MCF 10A (cell line): ENCODE measurements at regions of chr17 and their contacts with region 1.

Region 1: GRCh38 chr17:59155439-59156182 is at the start of gene PRR11:
- DNase-seq: peak; percentile 100
- H3K4me3 Mint-ChIP-seq: no peak within 1 kb of the TSS
- H3K27ac Mint-ChIP-seq: no peak within 1 kb of the TSS
- H3K4me1 Mint-ChIP-seq: peaks cover 49% of the 10 kb centered on the region
- H3K27me3 Mint-ChIP-seq: no peaks in the 10 kb centered on the region
- CTCF ChIP-seq: no peak
- total RNA-seq, gene PRR11: 35.7 and 48.5 TPM in 2 replicates

Region 2: GRCh38 chr17:59093702-59094231 is 61.8 kb before region 1 on chr17:
- CTCF ChIA-PET with region 1: no interaction called
- POLR2A ChIA-PET with region 1: interaction called, 10 read pairs
- intact Hi-C with region 1: no loop called
- DNase-seq: peak; percentile 87
- H3K4me3 Mint-ChIP-seq: peak overlapping the region; percentile 45
- H3K27ac Mint-ChIP-seq: peak overlapping the region; percentile 78
- H3K4me1 Mint-ChIP-seq: peaks cover 21% of the 10 kb centered on the region
- H3K27me3 Mint-ChIP-seq: no peaks in the 10 kb centered on the region
- CTCF ChIP-seq: no peak

Region 3: DNA sequence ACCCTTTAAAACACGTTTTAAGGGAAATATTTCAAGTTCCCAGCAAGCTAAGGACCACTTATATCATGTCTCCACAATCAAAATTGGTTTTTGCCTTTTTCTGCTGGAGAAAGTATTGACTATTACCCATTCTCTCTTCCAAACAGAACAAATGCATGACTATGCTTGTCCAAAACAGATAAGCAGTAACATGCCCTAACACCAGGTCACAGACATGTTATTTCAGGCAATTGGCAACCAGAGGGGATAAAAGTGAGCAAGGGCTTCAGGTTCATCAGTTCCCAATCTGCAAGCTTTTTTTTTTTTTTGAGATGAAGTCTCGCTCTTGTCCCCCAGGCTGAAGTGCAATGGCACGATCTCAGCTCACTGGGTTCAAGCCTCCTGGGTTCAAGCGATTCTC is 15.7 kb before region 1 on chr17:
- CTCF ChIA-PET with region 1: interaction called, 9 read pairs
- POLR2A ChIA-PET with region 1: interaction called, 14 read pairs
- intact Hi-C with region 1: no loop called
- DNase-seq: no peak
- H3K4me3 Mint-ChIP-seq: no peak overlapping the region
- H3K27ac Mint-ChIP-seq: peak overlapping the region; percentile 27
- H3K4me1 Mint-ChIP-seq: no peaks in the 10 kb centered on the region
- H3K27me3 Mint-ChIP-seq: no peaks in the 10 kb centered on the region
- CTCF ChIP-seq: no peak

Region 4: DNA sequence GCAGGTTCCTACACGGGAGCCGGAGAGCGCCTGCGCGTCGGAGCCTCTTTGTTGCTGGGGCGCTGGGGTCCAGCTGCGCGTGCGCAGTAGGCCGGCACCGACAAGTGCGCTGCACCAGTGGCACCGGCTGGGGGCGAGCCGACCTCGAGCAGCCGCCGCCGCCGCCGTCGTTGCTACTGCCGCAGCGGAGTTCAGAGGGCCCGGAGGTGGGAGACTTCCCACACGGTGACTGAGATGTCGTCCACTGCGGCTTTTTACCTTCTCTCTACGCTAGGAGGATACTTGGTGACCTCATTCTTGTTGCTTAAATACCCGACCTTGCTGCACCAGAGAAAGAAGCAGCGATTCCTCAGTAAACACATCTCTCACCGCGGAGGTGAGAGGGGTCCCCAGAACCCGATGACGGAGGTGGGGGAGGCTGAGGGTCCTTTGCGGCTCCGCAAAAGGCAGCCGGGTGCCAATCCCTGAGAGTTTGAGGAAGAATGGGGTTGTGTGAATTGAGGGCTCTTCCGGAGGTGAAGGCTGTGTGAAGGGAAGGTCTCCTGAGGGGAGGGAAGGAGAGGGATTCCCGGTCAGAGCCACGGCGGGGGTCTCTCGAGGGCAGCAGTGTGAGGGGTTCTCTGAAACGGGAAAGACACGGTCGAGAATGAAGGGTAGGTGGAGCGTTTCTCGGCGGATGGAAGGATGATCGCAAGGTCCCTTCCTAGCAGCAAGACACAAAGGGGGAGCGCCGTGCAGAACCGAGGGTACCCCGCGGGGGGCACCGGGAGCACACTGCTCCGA is 65.0 kb after region 1 on chr17 and contains the start of gene GDPD1:
- CTCF ChIA-PET with region 1: interaction called, 3 read pairs
- POLR2A ChIA-PET with region 1: interaction called, 9 read pairs
- intact Hi-C with region 1: loop called (anchors 5 kb)
- DNase-seq: peak; percentile 91
- H3K4me3 Mint-ChIP-seq: peak within 1 kb of the TSS; percentile 94
- H3K27ac Mint-ChIP-seq: peak within 1 kb of the TSS; percentile 52
- H3K4me1 Mint-ChIP-seq: peaks cover 5% of the 10 kb centered on the region
- H3K27me3 Mint-ChIP-seq: no peaks in the 10 kb centered on the region
- CTCF ChIP-seq: peak; percentile 61
- total RNA-seq, gene GDPD1: 2.2 and 2.9 TPM in 2 replicates